ENCODE measurements at regions of chr1 and their contacts with region 1.

Region 1: DNA sequence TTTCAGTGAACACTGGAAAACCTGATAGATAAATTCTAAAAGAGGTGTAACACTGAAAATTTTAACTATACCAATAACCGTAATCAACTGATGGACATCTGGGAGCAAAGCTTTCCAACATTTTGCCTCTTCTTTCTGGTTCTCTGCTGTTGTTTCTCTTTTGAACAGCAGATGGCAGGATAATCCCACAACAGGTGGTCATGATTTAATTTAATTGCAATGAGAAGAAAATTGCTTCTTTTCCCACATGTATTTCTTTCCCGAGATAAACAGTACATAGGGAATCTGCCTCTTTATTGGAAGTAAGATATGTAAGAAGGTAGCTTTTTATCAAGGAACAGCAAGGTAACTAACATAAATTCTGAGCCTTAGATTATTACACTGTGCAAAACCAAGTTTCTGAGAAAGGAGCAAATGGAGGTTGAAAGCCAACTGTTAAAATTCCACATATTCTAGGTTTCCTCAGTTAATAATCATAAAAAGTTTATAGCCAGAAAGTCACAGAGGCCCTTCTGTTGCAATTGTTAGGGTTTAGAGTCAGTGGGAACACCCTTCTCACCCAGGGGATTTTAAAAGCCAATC is 72.9 kb downstream of the RPS6KA1 start:
- DNase-seq: peak; percentile 67 to 80 (median 70)
- H3K4me3 ChIP-seq: no peak overlapping the region
- H3K27ac ChIP-seq: no peak overlapping the region
- H3K4me1 ChIP-seq: peaks cover 0 to 23% (median 12%) of the 10 kb centered on the region in 4 experiments
- H3K27me3 ChIP-seq: no peaks in the 10 kb centered on the region

Region 2: GRCh38 chr1:25874934-25875855 is 727.3 kb before region 1 on chr1 and contains the start of gene PAQR7:
- CTCF ChIA-PET with region 1: no interaction called
- POLR2A ChIA-PET with region 1: no interaction called
- DNase-seq: peak; percentile 59 to 82 (median 70)
- H3K4me3 ChIP-seq: peak within 1 kb of the TSS; percentile 49 to 84 (median 72)
- H3K27ac ChIP-seq: peak within 1 kb of the TSS in 1 of 2 experiments; percentile 71
- H3K4me1 ChIP-seq: peaks cover 0 to 53% (median 44%) of the 10 kb centered on the region in 4 experiments
- H3K27me3 ChIP-seq: no peaks in the 10 kb centered on the region

Region 3: GRCh38 chr1:26614655-26615411 is 12.4 kb after region 1 on chr1:
- CTCF ChIA-PET with region 1: interaction called, 17 read pairs
- POLR2A ChIA-PET with region 1: interaction called, 3 read pairs
- DNase-seq: no peak
- H3K4me3 ChIP-seq: no peak overlapping the region
- H3K27ac ChIP-seq: no peak overlapping the region
- H3K4me1 ChIP-seq: peaks cover 13 to 17% (median 16%) of the 10 kb centered on the region in 4 experiments
- H3K27me3 ChIP-seq: no peaks in the 10 kb centered on the region

Region 4: DNA sequence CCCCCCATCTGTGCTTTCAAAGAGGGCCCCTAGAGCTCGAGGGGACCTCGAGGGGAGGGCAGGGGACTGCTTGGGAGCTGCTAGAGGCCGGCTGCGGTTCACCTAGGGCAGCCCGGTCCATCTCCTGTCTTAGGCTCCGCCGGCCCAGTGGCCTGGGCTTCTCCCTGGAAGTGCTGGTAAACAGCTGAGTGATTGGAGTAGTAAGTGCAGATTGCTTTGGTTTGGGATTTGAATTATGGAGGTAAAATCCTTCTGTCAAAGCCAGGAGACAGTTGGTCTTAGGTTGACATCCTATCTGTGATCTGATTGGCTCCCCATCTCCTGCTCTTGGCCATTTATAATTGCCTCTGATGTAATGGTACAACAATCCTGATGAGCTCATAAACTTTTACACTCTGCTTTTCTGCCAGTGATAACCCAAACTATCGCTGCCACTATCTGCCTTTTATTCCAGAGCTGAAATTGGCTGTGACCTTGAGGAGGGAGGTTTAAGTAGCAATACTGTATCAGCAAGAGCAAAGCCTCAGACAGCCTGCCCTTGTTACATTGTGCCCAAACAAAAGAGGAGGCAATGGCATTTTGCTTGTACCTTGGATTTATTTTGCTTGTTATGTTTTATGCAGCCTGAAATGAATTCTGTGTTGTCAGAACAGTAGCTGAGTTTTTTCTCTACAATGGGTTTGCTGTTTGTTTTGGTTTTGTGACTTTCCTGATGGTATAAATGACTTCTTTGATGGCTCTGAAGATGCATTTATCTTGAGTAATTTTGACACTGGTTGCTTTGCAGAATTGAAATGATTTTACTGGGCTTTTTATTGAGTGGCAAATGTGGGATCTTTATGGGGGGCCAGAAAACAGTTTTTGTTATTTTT is 95.7 kb after region 1 on chr1:
- CTCF ChIA-PET with region 1: interaction called, 14 read pairs
- POLR2A ChIA-PET with region 1: no interaction called
- DNase-seq: peak; percentile 69 to 93 (median 91)
- H3K4me3 ChIP-seq: peak overlapping the region; percentile 58 to 88 (median 83)
- H3K27ac ChIP-seq: peak overlapping the region; percentile 41 to 94
- H3K4me1 ChIP-seq: peaks cover 64 to 74% (median 70%) of the 10 kb centered on the region in 4 experiments
- H3K27me3 ChIP-seq: no peaks in the 10 kb centered on the region

Region 5: DNA sequence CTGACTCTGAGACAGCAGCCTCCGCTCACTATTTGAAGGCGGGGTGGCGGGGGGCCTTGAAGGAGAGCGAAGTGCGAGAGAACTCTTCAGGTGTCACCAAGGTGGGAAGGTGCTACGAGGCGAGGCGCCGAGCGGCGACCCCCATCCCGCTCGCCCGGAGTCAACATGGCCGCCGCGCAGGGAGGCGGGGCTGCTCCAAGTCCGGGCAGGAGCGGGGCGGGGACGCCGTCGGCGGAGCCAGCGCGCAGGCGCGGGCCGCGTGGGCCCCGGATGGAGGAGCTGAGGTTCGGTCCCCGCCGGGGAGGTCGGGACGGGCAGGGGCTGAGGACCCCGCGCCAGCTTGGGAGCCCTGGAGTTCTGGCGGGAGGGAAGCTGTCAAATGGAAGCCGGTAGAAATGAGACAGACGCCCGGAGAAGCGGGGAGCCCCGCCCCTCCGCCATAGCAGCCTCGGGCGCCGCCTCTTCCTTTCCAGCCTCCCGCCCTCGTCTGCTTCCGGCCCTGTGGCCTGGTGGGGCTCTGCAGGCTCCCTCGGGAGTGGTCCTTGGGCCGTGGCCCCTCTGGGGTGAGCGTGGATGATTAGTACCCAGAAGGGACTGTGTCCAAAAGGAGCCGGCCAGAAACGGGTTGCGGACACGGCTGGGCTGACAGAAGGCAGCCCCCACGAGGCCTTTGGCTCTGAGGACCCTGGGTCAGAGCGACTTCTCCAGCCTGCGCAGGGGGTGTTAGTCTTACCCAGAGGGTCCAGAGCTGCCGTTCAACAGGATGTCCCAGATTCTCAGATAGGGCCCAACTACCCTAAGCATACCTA is 185.4 kb after region 1 on chr1 and contains the start of gene PIGV:
- CTCF ChIA-PET with region 1: interaction called, 186 read pairs
- POLR2A ChIA-PET with region 1: no interaction called
- DNase-seq: peak; percentile 80 to 88 (median 87)
- H3K4me3 ChIP-seq: peak within 1 kb of the TSS; percentile 72 to 95 (median 91)
- H3K27ac ChIP-seq: peak within 1 kb of the TSS; percentile 87 to 96
- H3K4me1 ChIP-seq: peaks cover 63 to 84% (median 73%) of the 10 kb centered on the region in 4 experiments
- H3K27me3 ChIP-seq: no peaks in the 10 kb centered on the region

Region 6: GRCh38 chr1:26811057-26811456 is 208.6 kb after region 1 on chr1:
- CTCF ChIA-PET with region 1: interaction called, 23 read pairs
- POLR2A ChIA-PET with region 1: no interaction called
- DNase-seq: peak in 1 of 3 donors; percentile 8
- H3K4me3 ChIP-seq: no peak overlapping the region
- H3K27ac ChIP-seq: no peak overlapping the region
- H3K4me1 ChIP-seq: peaks cover 0 to 4% (median 0%) of the 10 kb centered on the region in 4 experiments
- H3K27me3 ChIP-seq: no peaks in the 10 kb centered on the region

Region 7: DNA sequence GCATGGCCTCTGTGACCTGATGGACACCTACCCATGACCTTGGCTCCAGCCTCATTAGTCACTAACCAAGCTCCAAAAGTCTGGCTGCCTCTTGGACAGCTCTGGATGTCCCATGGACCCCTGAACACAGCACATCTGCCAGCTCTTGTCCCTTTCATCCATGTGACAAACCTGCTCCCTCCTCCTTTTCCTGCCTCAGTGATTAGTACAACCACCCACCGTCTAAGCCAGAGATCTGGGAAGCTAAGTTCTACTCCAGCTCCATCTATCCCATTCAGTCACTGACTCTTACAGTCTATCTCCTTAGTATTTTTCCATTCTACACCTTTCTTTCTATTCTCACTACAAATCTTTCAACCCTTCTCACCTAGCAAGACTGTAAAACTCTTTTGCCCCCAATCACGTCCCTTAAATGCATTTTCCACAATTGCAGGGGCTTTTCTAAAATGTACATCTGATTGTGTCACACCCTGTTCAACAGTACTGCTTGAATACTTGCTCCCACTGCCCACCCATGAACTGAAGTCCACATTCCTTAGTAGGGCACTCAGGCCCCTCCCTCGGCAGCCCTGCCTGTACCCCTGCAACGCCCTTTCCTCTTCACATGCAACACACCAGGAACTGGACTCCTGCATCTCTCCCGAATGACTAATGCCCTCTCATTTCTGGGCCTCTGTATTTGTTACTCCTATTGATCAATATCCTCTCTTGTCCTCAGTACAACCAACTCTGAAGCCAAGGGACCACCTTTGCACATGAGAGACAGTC is 280.4 kb after region 1 on chr1:
- CTCF ChIA-PET with region 1: interaction called, 10 read pairs
- POLR2A ChIA-PET with region 1: no interaction called
- DNase-seq: no peak
- H3K4me3 ChIP-seq: no peak overlapping the region
- H3K27ac ChIP-seq: no peak overlapping the region
- H3K4me1 ChIP-seq: no peaks in the 10 kb centered on the region
- H3K27me3 ChIP-seq: no peaks in the 10 kb centered on the region

Measured in common myeloid progenitor, CD34-positive (primary cell).